ENCODE measurements at regions of chr7 and their contacts with region 1.

Region 1: GRCh38 chr7:35537067-35538023 is 157.6 kb downstream of the HERPUD2 start:
- DNase-seq: peak; percentile 67
- H3K4me3 Mint-ChIP-seq: peak overlapping the region; percentile 58
- H3K27ac Mint-ChIP-seq: no peak overlapping the region
- H3K4me1 Mint-ChIP-seq: no peaks in the 10 kb centered on the region
- H3K27me3 Mint-ChIP-seq: peaks cover 21% of the 10 kb centered on the region

Region 2: DNA sequence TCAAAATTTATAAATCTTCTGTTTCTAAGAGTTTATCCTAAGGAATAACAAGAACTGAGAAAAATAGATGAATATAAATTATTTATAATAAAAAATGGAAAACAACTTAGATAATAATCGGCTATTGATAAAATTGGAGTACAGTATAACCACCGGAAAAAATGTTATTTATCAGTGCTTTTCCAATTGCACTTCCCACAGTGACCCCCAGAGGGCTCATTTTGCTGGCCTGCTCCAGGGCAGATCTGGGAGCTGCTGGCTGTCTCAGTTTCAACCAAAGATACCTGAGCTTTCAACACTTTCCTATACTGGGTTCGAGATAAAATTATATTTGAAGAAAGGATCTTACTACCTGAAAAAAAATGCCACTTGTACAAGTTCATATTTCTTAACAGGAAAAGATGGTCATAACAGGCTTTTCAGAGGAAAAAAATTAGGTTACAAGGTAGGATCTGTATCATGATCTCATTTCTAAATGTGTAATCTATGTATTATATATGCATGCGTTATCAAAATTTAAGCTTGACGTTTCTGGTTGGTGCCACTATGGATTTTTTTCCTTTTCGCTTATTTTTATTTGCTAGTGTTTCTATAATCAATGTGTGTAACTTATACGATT is 713.6 kb before region 1 on chr7:
- intact Hi-C with region 1: loop called (anchors 10 kb)
- DNase-seq: peak; percentile 11
- H3K4me3 Mint-ChIP-seq: no peak overlapping the region
- H3K27ac Mint-ChIP-seq: no peak overlapping the region
- H3K4me1 Mint-ChIP-seq: no peaks in the 10 kb centered on the region
- H3K27me3 Mint-ChIP-seq: peaks cover 2% of the 10 kb centered on the region

Region 3: DNA sequence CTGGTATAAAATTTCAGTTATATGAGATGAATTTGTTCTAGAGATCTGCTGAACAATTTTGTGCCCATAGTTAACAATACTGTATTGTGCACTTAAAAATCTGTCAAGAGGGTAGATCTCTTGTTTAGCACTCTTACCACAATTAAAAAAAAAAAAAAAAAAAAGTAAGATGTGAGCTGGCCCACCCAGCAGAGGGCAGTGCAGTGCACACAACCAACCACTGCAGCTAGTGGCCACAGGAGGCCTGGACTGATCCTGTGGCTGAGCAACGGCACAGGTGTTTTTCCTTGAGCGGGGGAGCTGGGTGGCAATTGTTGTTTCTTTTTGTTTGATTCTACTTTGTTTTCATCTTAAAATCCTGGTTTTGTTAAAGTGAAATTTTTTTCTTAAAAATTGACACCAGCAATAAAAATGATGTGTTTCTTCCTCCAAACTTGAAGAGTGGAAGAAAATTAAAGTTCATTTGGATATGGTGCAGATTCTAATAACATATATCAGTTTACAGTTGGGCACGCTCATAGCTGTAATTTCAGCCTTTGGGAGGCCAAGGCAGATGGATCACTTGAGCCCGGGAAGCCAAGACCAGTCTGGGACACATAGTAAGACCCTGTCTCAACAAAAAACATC is 112.4 kb before region 1 on chr7:
- intact Hi-C with region 1: loop called (anchors 1 kb)
- DNase-seq: peak; percentile 17
- H3K4me3 Mint-ChIP-seq: no peak overlapping the region
- H3K27ac Mint-ChIP-seq: no peak overlapping the region
- H3K4me1 Mint-ChIP-seq: no peaks in the 10 kb centered on the region
- H3K27me3 Mint-ChIP-seq: peaks cover 12% of the 10 kb centered on the region

Region 4: GRCh38 chr7:35624299-35625186 is 87.2 kb after region 1 on chr7:
- intact Hi-C with region 1: loop called (anchors 1 kb)
- DNase-seq: peak; percentile 6
- H3K4me3 Mint-ChIP-seq: no peak overlapping the region
- H3K27ac Mint-ChIP-seq: no peak overlapping the region
- H3K4me1 Mint-ChIP-seq: no peaks in the 10 kb centered on the region
- H3K27me3 Mint-ChIP-seq: peaks cover 5% of the 10 kb centered on the region